ENCODE measurements at regions of chr19 and their contacts with region 1.

Region 1: GRCh38 chr19:17859533-17860330 is at the start of gene RPL18A:
- DNase-seq: peak; percentile 99
- ATAC-seq: peak; percentile 95
- H3K4me3 ChIP-seq: peak within 1 kb of the TSS; percentile 87
- H3K27ac ChIP-seq: peak within 1 kb of the TSS; percentile 43
- H3K4me1 ChIP-seq: peaks cover 16% of the 10 kb centered on the region
- H3K27me3 ChIP-seq: no peaks in the 10 kb centered on the region
- CTCF ChIP-seq: peak; percentile 85
- total RNA-seq, gene RPL18A: 1,763 and 2,241 TPM in 2 replicates

Region 2: GRCh38 chr19:17489392-17490038 is 370.2 kb before region 1 on chr19:
- CTCF ChIA-PET with region 1: interaction called, 10 read pairs
- POLR2A ChIA-PET with region 1: no interaction called
- intact Hi-C with region 1: no loop called
- DNase-seq: no peak
- ATAC-seq: no peak
- H3K4me3 ChIP-seq: no peak overlapping the region
- H3K27ac ChIP-seq: no peak overlapping the region
- H3K4me1 ChIP-seq: peaks cover 7% of the 10 kb centered on the region
- H3K27me3 ChIP-seq: no peaks in the 10 kb centered on the region
- CTCF ChIP-seq: peak; percentile 28

Region 3: GRCh38 chr19:17590877-17591276 is 268.9 kb before region 1 on chr19:
- CTCF ChIA-PET with region 1: no interaction called
- POLR2A ChIA-PET with region 1: no interaction called
- intact Hi-C with region 1: no loop called
- DNase-seq: no peak
- ATAC-seq: no peak
- H3K4me3 ChIP-seq: no peak overlapping the region
- H3K27ac ChIP-seq: no peak overlapping the region
- H3K4me1 ChIP-seq: no peaks in the 10 kb centered on the region
- H3K27me3 ChIP-seq: no peaks in the 10 kb centered on the region
- CTCF ChIP-seq: no peak

Region 4: DNA sequence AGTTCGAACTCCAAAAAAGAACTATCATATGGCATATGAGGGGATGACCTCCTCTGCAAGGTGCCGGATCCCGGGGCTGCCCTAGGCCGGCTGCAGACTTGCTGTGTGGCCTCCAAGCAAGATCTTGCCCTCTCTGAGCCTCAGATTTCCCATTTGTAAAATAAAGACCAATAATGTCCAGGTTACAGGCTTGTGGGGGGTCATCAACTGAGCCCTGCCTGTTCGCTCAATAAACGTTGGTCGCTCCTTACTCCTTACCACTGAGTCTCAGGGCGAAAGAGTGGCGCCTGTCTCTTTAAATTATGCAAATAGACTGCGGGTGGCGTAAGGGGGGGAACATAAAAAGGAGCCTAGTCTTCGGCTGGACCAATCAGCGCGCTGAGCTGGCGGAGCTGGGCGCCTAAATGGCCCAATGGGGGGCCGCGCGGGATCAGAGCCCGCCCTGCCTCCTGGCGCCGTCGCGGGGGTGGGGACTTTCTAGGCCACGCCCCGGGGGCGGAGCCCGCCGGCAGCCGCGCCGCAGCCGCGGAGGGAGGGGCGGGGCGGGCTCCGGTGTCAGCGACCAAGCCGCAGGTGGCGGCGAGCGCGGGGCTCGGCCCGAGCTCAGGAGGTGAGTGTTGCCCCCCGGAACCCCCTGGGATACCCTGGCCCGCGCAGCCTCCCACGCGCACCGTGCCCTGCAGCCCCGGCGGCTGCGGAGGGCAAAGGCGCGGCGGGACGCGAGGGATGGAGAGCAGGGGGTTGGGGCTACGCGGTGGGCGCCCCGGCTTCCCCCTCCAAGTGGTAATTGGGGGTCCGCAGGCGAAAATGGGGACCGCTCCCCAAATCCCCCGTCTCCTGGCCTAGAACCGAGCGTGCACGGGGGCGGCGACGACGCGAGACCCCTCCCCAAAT is 112.3 kb before region 1 on chr19:
- CTCF ChIA-PET with region 1: interaction called, 14 read pairs
- POLR2A ChIA-PET with region 1: no interaction called
- intact Hi-C with region 1: no loop called
- DNase-seq: peak; percentile 97
- ATAC-seq: peak; percentile 100
- H3K4me3 ChIP-seq: peak overlapping the region; percentile 72
- H3K27ac ChIP-seq: no peak overlapping the region
- H3K4me1 ChIP-seq: no peaks in the 10 kb centered on the region
- H3K27me3 ChIP-seq: no peaks in the 10 kb centered on the region
- CTCF ChIP-seq: no peak

Region 5: DNA sequence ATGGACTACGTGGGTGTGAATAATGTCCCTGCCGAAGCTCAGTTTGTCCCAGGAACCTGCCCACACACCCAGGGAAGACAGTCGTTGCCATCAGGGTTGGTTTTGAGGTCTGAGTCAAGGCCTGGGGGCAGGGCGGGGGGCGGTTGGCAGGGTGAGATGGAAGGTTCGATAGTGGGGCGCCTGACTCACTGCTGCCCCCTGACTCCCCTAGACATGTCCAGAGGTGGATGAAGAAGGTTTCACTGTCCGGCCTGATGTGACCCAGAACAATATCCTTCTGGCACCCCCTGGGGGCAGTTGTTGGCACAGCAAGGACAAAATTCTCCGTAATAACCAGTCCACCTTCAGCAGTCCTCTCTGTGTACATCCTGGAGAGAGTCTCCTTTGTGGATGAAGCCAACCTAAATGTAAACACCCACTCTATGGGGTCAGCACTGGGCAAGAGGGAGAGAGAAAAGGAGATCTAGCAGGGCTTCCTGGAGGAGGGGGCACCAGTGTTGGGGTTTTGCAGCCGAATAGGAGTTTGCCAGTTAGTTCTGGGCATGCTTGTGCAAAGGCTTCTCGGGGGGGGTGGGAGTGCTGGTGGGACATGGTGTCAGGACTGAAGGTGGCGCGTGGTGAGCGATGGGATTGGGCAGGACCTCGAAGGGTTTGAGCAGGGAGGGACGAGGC is 84.4 kb before region 1 on chr19:
- CTCF ChIA-PET with region 1: no interaction called
- POLR2A ChIA-PET with region 1: no interaction called
- intact Hi-C with region 1: loop called (anchors 5 kb)
- DNase-seq: peak; percentile 74
- ATAC-seq: peak; percentile 4; the same call in 1 of the 2 replicates
- H3K4me3 ChIP-seq: no peak overlapping the region
- H3K27ac ChIP-seq: no peak overlapping the region
- H3K4me1 ChIP-seq: peaks cover 23% of the 10 kb centered on the region
- H3K27me3 ChIP-seq: no peaks in the 10 kb centered on the region
- CTCF ChIP-seq: peak; percentile 86

Region 6: GRCh38 chr19:17817668-17818363 is 41.9 kb before region 1 on chr19:
- CTCF ChIA-PET with region 1: no interaction called
- POLR2A ChIA-PET with region 1: no interaction called
- intact Hi-C with region 1: no loop called
- DNase-seq: no peak
- ATAC-seq: no peak
- H3K4me3 ChIP-seq: no peak overlapping the region
- H3K27ac ChIP-seq: no peak overlapping the region
- H3K4me1 ChIP-seq: no peaks in the 10 kb centered on the region
- H3K27me3 ChIP-seq: no peaks in the 10 kb centered on the region
- CTCF ChIP-seq: no peak

Region 7: GRCh38 chr19:17830567-17831418 is 28.9 kb before region 1 on chr19:
- CTCF ChIA-PET with region 1: interaction called, 14 read pairs
- POLR2A ChIA-PET with region 1: interaction called, 4 read pairs
- intact Hi-C with region 1: loop called (anchors 1 kb)
- DNase-seq: peak; percentile 94
- ATAC-seq: peak; percentile 89
- H3K4me3 ChIP-seq: peak overlapping the region; percentile 93
- H3K27ac ChIP-seq: peak overlapping the region; percentile 47
- H3K4me1 ChIP-seq: peaks cover 10% of the 10 kb centered on the region; the same call in 1 of the 2 replicates
- H3K27me3 ChIP-seq: no peaks in the 10 kb centered on the region
- CTCF ChIP-seq: no peak

Region 8: GRCh38 chr19:17873786-17874757 is 14.3 kb after region 1 on chr19:
- CTCF ChIA-PET with region 1: interaction called, 10 read pairs
- POLR2A ChIA-PET with region 1: no interaction called
- intact Hi-C with region 1: no loop called
- DNase-seq: peak; percentile 60
- ATAC-seq: peak; percentile 56
- H3K4me3 ChIP-seq: peak overlapping the region; percentile 65
- H3K27ac ChIP-seq: no peak overlapping the region
- H3K4me1 ChIP-seq: peaks cover 5% of the 10 kb centered on the region; the same call in 1 of the 2 replicates
- H3K27me3 ChIP-seq: 0 out of 2 replicates have a peak, but pooled peaks cover 12% of the 10 kb centered on the region
- CTCF ChIP-seq: no peak

Region 9: DNA sequence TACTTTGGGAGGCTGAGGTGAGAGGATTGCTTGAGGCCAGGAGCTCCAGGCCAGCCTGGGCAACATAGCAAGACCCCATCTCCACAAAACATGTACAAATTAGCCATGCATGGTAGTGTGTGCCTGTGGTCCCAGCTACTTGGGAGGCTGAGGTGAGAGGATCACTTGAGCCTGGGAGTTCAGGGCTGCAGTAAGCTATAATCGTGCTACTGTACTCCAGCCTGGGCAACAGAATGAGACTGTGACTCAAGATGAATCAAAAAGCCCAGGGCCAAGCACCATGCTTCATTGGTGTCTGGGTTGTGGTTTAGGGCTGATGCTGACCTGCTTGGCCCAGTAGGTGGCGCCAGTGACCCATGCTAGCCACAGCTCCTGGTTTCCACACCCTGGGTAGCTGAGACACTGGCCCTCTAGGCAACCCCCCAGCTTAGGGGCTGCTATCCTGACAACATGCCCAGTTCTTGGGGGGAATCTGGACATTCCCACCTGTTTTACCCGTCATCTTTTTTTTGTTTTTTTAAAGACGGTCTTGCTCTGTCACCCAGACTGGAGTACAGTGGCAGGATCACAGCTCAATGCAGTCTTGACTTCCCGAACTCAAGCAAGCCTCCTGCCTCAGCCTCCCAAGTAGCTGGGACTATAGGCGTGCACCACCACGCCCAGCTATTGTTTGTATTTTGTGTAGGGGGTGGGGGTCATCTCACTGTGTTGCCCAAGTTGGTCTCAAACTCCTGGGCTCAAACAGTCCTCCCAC is 78.5 kb after region 1 on chr19:
- CTCF ChIA-PET with region 1: interaction called, 33 read pairs
- POLR2A ChIA-PET with region 1: interaction called, 3 read pairs
- intact Hi-C with region 1: loop called (anchors 2 kb)
- DNase-seq: peak; percentile 94
- ATAC-seq: peak; percentile 92
- H3K4me3 ChIP-seq: no peak overlapping the region
- H3K27ac ChIP-seq: 0 out of 2 replicates have a peak overlapping the region, but pooled peaks have one; percentile 22
- H3K4me1 ChIP-seq: peaks cover 13% of the 10 kb centered on the region
- H3K27me3 ChIP-seq: no peaks in the 10 kb centered on the region
- CTCF ChIP-seq: peak; percentile 89

Region 10: DNA sequence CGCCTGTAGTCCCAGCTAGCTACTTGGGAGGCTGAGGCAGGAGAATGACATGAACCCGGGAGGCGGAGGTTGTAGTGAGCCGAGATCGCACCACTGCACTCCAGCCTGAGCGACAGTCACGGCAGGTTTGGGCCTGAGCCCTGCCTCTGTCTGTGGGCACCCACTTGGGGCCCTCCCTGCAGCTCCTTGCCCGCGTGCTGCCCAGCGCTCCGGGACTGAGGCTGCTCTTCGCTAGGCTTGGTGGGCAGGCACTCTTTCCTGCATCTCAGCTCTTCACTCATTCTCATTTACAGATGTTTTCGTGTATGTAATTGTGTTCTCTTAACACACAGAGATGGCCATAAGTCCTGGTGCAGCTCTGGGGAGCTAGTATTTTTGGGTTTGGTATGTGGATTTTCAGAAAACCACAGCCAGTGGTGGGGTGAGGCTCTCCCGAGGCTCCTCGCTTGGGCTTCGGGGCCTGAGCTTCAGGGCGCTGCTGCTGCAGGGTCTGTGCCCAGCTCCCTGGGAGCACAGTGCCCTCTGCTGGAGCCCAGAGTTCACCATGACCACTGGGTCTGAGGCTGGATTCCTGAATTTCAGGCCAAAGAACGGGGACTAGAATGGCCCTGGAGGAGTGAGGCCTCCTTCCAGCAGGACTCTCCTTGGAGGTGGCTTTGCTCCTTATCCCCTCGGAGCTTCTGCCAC is 987.3 kb after region 1 on chr19:
- CTCF ChIA-PET with region 1: no interaction called
- POLR2A ChIA-PET with region 1: no interaction called
- intact Hi-C with region 1: no loop called
- DNase-seq: peak; percentile 74
- ATAC-seq: peak; percentile 95
- H3K4me3 ChIP-seq: no peak overlapping the region
- H3K27ac ChIP-seq: no peak overlapping the region
- H3K4me1 ChIP-seq: no peaks in the 10 kb centered on the region
- H3K27me3 ChIP-seq: no peaks in the 10 kb centered on the region
- CTCF ChIP-seq: peak; percentile 93